Left ventricle myocardium superior (tissue), 1 donor: ENCODE measurements at regions of chr3 and their contacts with region 1.

Region 1: GRCh38 chr3:42443819-42444436 is 33.5 kb upstream of the LYZL4 start:
- DNase-seq: peak; percentile 87
- ATAC-seq: peak; percentile 96

Region 2: GRCh38 chr3:41893977-41894376 is 550.0 kb before region 1 on chr3:
- intact Hi-C with region 1: loop called (anchors 5 kb)
- DNase-seq: no peak
- ATAC-seq: no peak

Region 3: GRCh38 chr3:42229942-42230688 is 213.8 kb before region 1 on chr3:
- intact Hi-C with region 1: loop called (anchors 10 kb)
- DNase-seq: no peak
- ATAC-seq: no peak

Region 4: GRCh38 chr3:42403737-42404136 is 40.2 kb before region 1 on chr3:
- intact Hi-C with region 1: no loop called
- DNase-seq: no peak
- ATAC-seq: no peak

Region 5: GRCh38 chr3:42819351-42819965 is 375.5 kb after region 1 on chr3:
- intact Hi-C with region 1: no loop called
- DNase-seq: no peak
- ATAC-seq: no peak

Region 6: DNA sequence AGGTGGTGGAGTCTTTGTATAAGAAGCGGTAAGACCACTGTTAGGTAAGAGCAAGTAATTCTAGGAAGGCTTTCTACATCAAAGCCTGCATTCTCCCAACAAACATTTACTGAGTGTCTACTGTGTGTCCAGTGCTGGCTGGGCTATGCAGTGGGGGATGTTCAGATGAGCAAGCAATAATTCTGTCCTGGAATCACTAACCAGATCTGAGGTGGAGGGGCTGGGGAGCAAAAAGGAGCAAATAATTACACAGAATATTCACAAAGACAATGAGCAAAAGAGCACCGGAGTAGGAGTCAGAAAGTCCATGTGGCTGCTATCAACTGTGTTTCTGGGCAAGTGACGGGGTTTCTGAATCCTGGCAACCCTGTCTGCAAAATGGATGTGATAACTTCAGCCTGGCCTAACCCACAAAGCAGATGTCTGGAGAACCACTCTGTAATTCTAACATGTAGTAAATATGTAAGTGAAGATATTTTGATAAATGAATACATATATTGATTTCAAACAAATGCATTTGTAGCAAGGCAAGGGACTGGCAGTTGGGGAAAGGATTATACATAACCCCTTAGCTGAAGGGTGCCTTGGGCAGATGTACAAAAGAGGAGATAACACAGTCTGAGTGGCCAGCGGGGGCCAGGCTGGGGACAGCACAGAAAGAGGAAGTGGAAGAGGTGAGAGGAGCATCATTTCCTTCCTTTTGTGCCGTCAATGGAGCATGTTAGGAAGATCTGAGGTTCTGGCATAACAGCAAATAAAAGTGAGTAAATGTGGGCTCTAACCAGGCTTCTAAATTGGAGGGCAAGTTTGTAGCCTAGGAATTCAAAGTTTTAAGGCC is 403.0 kb after region 1 on chr3:
- intact Hi-C with region 1: no loop called
- DNase-seq: peak; percentile 51
- ATAC-seq: peak; percentile 35